ENCODE measurements at regions of chr1 and their contacts with region 1.

Region 1: GRCh38 chr1:54160351-54160750 is 7.6 kb upstream of the CDCP2 start:
- DNase-seq: no peak
- H3K4me3 ChIP-seq: no peak overlapping the region
- H3K27ac ChIP-seq: no peak overlapping the region
- H3K4me1 ChIP-seq: no peaks in the 10 kb centered on the region
- H3K27me3 ChIP-seq: no peaks in the 10 kb centered on the region
- CTCF ChIP-seq: no peak
- POLR2A ChIP-seq: no peak

Region 2: GRCh38 chr1:53238197-53239155 is 921.9 kb before region 1 on chr1 and contains the start of gene MAGOH:
- intact Hi-C with region 1: no loop called
- DNase-seq: peak; percentile 90 to 91
- H3K4me3 ChIP-seq: peak within 1 kb of the TSS; percentile 92 to 99 (median 98)
- H3K27ac ChIP-seq: peak within 1 kb of the TSS; percentile 89 to 93
- H3K4me1 ChIP-seq: no peaks in the 10 kb centered on the region
- H3K27me3 ChIP-seq: no peaks in the 10 kb centered on the region
- CTCF ChIP-seq: no peak
- POLR2A ChIP-seq: peak; percentile 66
- total RNA-seq, gene MAGOH: 35.0 to 45.2 (median 37.5) TPM

Region 3: DNA sequence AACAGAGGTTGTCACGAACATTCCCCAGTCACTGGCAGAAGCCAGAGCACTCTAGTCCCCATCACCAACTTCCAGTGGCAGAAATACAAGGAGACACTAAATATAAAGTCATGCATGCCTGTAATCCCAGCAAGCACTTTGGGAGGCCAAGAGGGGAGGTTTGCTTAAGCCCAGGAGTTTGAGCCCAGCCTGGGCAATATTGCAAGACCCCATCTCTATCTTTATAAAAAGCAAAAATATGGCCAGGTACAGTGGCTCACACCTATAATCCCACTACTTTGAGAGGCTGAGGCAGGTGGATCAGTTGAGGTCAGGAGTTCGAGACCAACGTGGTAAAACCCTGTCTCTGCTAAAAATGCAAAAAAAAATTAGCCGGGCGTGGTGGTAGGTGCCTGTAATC is 33.1 kb after region 1 on chr1:
- intact Hi-C with region 1: loop called (anchors 2 kb)
- DNase-seq: no peak
- H3K4me3 ChIP-seq: no peak overlapping the region
- H3K27ac ChIP-seq: no peak overlapping the region
- H3K4me1 ChIP-seq: no peaks in the 10 kb centered on the region
- H3K27me3 ChIP-seq: no peaks in the 10 kb centered on the region
- CTCF ChIP-seq: no peak
- POLR2A ChIP-seq: no peak